ENCODE measurements at regions of chr16 and their contacts with region 1.

Region 1: DNA sequence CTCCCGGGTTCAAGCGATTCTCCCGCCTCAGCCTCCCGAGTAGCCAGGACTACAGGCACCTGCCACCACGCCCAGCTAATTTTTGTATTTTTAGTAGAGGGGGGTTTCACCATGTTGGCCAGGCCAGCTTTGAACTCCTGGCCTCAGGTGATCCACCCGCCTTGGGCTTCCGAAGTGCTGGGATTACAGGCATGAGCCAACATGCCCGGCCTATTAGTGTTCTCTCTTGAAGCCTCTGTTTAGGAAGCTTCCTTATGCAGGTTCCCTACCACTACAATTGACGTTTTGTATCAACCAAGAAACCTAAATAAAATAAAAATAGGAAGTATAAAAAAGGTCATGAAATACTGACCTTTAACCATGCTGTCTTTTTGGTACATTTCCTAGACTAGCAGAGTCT is 16.0 kb downstream of the CHST5 start:
- DNase-seq: no peak
- ATAC-seq: no peak
- H3K4me3 ChIP-seq: no peak overlapping the region
- H3K27ac ChIP-seq: no peak overlapping the region
- H3K4me1 ChIP-seq: peaks cover 0 to 10% (median 6%) of the 10 kb centered on the region in 12 donors
- H3K27me3 ChIP-seq: no peaks in the 10 kb centered on the region
- CTCF ChIP-seq: no peak
- POLR2A ChIP-seq: no peak

Region 2: DNA sequence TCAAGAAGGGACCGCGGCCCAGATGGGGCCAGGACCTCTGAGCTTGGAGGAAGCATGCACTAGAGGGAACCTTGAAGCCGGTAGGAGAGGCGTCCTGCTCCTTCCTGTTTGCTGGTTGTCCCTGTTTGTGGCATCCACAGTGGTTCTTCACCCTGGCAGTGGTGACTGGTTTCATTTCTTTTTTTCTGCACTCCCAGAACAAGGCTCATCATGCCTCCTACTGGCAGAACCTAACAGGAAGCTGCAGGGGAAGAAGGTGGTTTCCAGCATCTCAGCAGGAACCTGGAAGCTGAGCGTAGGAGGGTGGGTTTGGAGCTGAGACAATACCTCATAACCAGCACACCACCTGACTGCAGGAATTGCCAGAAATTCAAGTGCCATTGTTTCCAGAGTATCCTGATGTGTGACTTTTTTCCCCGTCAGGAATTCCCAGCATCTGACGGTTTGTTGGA is 30.4 kb after region 1 on chr16:
- intact Hi-C with region 1: loop called in 4 of 10 experiments (anchors 5 kb)
- DNase-seq: peak in 4 of 5 donors; percentile 51 to 76 (median 73)
- ATAC-seq: peak; percentile 54 to 89 (median 64)
- H3K4me3 ChIP-seq: peak overlapping the region in 5 of 12 donors; percentile 5 to 32 (median 23)
- H3K27ac ChIP-seq: peak overlapping the region in 10 of 12 donors; percentile 50 to 81 (median 70)
- H3K4me1 ChIP-seq: peaks cover 0 to 35% (median 9%) of the 10 kb centered on the region in 12 donors
- H3K27me3 ChIP-seq: no peaks in the 10 kb centered on the region
- CTCF ChIP-seq: peak; percentile 14 to 68 (median 48)
- POLR2A ChIP-seq: no peak

Measured in heart left ventricle (tissue), 16 donors.